ENCODE measurements at regions of chr1 and their contacts with region 1.

Region 1: DNA sequence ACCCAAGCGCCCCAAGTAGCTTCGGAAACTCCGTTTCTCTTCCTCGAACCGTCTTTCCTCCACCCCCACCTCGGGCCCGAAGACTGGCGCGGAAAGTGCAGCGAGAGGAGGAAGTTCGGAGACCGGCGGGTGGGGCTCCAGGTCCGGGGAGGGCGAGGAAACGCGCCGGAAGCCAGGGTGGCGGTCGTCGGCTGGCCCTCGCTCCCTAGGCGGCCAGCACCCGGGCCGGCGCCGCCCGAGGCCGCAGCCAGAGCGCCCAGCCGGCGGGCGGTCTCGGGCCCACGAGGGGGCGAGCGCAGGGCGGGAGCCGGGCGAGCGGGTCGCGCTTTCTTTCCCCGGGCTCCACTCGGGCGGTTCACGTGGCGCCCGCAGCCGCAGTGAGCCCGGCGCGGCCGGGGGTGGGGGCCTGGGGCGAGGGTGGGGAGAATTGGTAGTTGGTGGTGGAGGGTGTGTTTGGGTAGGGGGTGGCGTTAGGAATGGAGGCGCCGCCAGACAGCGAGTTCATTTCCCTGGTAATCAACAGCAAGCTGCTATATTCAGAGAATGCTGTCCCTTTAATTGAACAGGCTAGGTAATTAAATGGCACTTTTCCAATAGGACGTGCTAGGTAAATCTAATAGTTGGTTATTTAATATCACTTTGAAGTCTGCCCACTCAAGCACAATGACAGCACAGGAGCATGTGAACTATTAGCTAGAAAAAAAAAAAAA is 6.7 kb downstream of the LMO4 start:
- DNase-seq: peak; percentile 25 to 92 (median 46)

Region 2: DNA sequence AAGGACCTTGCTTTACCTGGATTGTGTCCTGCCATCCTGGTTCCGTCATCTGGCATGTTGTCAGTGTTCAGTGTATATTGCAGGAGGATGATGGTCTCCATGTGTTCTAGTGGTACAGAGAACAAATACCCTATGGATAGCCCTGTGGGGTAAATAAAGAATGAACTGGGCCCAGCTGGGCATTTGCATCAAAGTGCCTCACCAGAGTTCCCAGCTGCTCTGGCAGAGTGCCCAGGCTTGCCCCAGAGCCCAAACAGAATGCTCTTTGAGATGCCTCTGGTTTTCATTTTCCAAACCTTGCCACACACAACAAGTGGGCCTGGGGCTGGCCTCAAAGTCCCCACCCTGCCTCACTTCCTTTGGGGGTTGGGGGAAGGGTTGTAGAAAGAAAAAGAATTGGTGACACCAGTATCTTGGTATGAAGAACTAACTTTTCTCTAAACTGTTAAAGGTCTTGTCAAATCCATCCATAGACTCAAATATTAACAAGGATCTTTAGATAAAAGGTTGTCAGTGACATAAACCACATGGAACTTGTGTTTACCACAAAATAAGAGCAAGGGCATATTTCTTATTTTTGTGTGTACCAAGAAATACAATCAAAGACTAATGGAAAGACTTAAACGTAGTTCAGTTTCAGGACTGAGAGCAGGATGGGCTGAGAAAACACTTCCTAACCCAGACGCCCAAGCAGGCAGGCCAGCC is 75.6 kb after region 1 on chr1:
- intact Hi-C with region 1: loop called (anchors 5 kb)
- DNase-seq: peak; percentile 84 to 99 (median 94)